ENCODE measurements at regions of chr7 and their contacts with region 1.

Region 1: GRCh38 chr7:138002096-138002827 is 376 bp upstream of the CREB3L2 start:
- DNase-seq: peak; percentile 97 to 99 (median 98)
- H3K4me3 ChIP-seq: peak overlapping the region; percentile 99
- H3K4me3 Mint-ChIP-seq: peak overlapping the region; percentile 85 to 97 (median 96)
- H3K27ac ChIP-seq: peak overlapping the region; percentile 94
- H3K27ac Mint-ChIP-seq: peak overlapping the region; percentile 66 to 97 (median 93)
- H3K4me1 ChIP-seq: peaks cover 18% of the 10 kb centered on the region
- H3K4me1 Mint-ChIP-seq: peaks cover 34 to 43% (median 40%) of the 10 kb centered on the region in 3 donors
- H3K27me3 ChIP-seq: no peaks in the 10 kb centered on the region
- H3K27me3 Mint-ChIP-seq: no peaks in the 10 kb centered on the region

Region 2: DNA sequence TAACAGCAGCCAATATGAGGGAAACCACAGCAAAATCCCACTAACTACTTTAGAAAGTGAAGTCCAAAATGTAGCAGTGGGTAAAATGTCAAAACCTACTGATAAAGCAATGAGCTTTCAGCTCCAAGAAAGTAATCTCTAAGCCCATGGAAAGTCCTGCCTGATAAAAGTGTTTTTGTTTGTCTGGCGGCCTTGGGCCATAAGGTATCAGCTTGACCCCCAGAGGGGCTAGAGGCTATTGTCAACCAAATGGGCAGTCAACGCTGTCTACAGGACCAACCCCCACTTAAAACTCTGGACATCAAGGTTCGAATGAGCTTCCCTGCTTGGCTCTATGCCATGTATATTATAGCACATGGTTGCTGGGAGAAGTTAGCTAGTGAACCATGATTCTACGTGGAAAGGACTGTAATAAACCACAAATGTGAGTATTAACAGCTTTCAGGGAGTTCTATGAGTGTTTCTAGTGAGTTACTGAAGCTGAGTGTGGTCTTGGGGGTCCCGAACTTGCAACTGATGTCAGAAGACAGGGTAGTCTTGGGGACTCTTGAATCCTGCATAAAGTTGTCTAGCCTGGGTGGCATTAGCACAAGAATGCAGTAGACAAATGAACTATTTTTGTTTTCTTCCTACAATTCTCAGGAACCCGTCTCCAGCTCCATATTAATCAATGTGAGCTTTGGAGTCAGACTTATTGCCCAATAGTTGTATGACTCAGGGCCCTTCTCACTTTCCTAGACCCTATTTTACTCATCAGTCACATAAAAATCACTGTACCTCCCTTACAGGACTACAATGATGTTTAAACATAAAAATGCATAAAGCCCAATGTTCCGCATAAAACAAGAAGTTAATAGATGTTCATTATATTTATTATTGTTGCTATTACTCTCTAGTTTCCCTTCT is 320.4 kb before region 1 on chr7:
- CTCF ChIA-PET with region 1: no interaction called
- POLR2A ChIA-PET with region 1: no interaction called
- DNase-seq: no peak
- H3K4me3 ChIP-seq: no peak overlapping the region
- H3K4me3 Mint-ChIP-seq: no peak overlapping the region
- H3K27ac ChIP-seq: no peak overlapping the region
- H3K27ac Mint-ChIP-seq: no peak overlapping the region
- H3K4me1 ChIP-seq: no peaks in the 10 kb centered on the region
- H3K4me1 Mint-ChIP-seq: no peaks in the 10 kb centered on the region
- H3K27me3 ChIP-seq: no peaks in the 10 kb centered on the region
- H3K27me3 Mint-ChIP-seq: peaks cover 0 to 11% of the 10 kb centered on the region in 2 donors

Region 3: DNA sequence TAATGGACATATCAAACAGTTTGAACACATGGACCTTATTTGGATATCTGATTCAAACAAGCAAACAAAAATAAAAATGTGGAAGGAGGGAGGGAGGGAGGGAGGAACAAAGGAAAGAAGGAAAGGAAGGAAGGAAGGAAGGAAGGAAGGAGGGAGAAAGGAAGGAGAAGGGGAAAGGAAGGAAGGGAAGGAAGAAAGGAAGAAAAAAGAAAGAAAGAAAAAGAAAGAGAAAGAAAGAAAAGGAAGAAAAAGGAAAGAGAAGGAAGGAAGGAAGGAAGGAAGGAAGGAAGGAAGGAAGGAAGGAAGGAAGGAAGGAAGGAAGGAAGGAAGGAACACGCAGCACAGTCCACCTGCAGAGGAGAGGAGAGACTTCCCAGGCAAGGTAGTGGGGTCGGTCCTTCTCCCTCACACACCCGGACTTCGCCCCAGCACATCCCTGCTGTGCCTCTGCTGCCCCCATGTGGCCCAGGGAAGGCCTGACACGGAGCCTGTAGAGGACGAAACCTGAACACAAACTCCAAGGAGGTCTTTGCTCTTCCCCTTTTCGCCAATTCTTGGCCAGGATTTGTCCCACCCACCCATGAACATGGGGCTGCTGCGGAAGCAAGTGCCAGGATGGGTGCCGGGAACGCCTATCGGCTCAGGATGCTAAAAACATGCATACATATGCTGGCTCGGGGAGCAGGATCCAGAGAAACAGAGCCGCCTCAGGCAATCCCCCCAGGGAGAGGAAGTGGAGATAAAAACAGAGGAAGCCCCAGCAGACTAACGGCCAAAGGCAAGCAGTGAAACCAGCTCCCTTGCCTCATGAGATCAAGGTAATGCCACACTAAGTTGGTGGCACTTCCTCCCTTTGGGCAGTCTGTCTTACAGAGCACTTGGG is 103.2 kb before region 1 on chr7:
- CTCF ChIA-PET with region 1: interaction called, 303 read pairs
- POLR2A ChIA-PET with region 1: no interaction called
- DNase-seq: peak; percentile 48 to 77 (median 64)
- H3K4me3 ChIP-seq: no peak overlapping the region
- H3K4me3 Mint-ChIP-seq: peak overlapping the region in 6 of 7 donors; percentile 15 to 58 (median 42)
- H3K27ac ChIP-seq: no peak overlapping the region
- H3K27ac Mint-ChIP-seq: peak overlapping the region; percentile 43 to 88 (median 72)
- H3K4me1 ChIP-seq: no peaks in the 10 kb centered on the region
- H3K4me1 Mint-ChIP-seq: peaks cover 20 to 25% (median 21%) of the 10 kb centered on the region in 3 donors
- H3K27me3 ChIP-seq: no peaks in the 10 kb centered on the region
- H3K27me3 Mint-ChIP-seq: no peaks in the 10 kb centered on the region

Region 4: DNA sequence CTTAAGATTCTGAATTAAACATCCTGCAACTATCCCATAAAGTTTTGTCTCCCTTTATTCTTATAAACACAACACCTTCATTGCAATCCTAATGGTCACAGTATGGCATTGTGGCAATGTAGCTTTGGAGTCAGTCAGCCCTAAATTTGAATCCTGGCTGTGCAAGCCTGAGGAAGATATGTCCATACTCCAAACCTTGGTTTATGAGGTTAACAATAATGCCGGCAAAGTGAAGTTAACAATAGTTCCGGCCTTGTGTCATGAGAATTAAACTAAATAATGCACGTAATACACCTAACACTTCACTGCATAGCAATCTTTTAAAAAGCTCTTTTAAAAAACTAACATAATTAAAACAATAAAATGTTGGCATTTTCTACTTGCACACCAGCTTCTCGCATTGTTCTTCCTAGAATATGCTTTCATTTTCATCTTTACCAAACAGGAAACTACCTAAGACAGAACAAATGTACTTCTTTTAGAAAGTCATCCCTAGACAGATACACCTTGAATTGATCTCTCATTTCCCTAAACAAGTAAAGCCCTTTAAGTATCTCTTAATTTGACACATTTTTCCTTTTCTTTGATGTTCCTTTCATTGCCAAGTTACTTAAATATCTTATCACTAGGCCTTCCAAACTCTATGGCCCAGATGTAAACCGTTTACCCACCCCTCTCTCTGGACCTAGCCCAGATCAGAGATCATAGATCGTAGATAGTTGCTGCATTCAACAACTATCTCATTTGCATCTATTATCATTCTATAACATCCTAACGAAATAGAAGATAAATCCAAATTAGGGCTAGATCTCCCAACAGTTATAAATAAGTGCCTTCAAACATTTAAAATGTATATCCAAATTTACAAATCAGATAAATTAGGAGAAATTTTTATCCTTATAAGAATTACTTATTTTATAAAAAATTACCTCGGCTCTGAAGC is 67.0 kb before region 1 on chr7:
- CTCF ChIA-PET with region 1: interaction called, 13 read pairs
- POLR2A ChIA-PET with region 1: interaction called, 3 read pairs
- DNase-seq: peak in 2 of 5 donors; percentile 14 to 34
- H3K4me3 ChIP-seq: peak overlapping the region; percentile 39
- H3K4me3 Mint-ChIP-seq: peak overlapping the region; percentile 87 to 94 (median 88)
- H3K27ac ChIP-seq: peak overlapping the region; percentile 57
- H3K27ac Mint-ChIP-seq: peak overlapping the region; percentile 84 to 98 (median 96)
- H3K4me1 ChIP-seq: peaks cover 35% of the 10 kb centered on the region
- H3K4me1 Mint-ChIP-seq: peaks cover 50 to 57% (median 56%) of the 10 kb centered on the region in 3 donors
- H3K27me3 ChIP-seq: no peaks in the 10 kb centered on the region
- H3K27me3 Mint-ChIP-seq: no peaks in the 10 kb centered on the region

Region 5: DNA sequence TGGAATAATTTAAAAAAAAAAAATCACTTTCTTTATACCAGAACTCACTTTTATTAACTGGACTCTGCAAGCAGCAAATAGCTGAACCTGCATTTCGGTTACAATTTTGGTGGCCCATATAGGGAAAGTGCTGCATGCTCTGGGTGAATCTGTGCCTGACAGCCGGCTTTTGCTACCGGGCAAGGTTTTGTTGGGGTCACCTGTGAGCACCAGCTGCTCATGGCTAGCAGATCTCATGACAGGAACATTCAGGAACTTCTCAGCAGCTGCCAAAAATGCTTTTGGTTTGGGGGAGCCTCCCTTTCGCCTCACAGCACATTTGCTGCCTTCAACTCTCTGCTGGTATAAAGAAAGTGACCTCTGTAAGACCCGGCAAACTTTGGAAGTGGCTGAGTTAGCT is 12.8 kb after region 1 on chr7:
- CTCF ChIA-PET with region 1: interaction called, 19 read pairs
- POLR2A ChIA-PET with region 1: no interaction called
- DNase-seq: no peak
- H3K4me3 ChIP-seq: no peak overlapping the region
- H3K4me3 Mint-ChIP-seq: no peak overlapping the region
- H3K27ac ChIP-seq: no peak overlapping the region
- H3K27ac Mint-ChIP-seq: no peak overlapping the region
- H3K4me1 ChIP-seq: no peaks in the 10 kb centered on the region
- H3K4me1 Mint-ChIP-seq: no peaks in the 10 kb centered on the region
- H3K27me3 ChIP-seq: no peaks in the 10 kb centered on the region
- H3K27me3 Mint-ChIP-seq: peaks cover 0 to 6% of the 10 kb centered on the region in 2 donors

Measured in CD8-positive, alpha-beta memory T cell (primary cell).